ENCODE measurements at regions of chr1 and their contacts with region 1.

Region 1: DNA sequence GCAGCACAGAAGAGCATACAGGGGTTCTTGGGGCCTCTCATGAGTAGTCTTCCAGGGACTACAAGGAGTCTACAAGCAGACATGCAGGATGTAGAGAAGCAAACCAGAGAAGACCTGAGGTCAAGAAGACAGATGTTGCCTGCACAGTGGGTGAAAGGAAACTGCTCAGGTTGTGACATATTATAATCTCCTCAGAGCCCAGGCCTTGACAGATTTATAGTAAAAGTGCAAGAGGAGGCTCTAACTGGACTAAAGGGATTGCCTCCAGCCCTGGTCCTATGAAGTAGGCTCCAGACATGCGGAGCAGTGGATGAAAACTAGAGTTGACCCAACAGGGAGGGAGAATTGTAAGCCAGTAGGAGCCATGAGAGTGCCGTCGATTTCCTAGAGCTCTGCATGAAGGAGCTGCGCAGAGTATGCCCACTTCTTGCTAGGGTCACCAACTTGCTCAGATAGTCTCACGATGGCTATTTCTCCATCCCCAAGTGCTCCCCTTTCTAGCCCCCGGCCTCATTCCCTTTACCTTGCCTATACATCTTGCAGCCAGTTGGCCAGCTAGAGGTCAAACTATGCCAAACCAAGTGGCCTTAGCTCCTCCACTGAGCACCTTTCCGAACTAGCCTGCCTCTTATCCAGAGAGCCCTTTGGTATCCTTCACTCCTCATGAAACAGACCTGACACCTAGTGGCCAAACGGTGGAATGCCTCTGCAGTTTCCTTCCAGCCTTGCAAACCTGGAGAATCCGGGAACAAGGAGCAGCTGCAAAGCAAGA is 36.2 kb upstream of the IPO9 start:
- DNase-seq: peak; percentile 96
- H3K4me3 Mint-ChIP-seq: no peak overlapping the region
- H3K27ac Mint-ChIP-seq: no peak overlapping the region
- H3K4me1 Mint-ChIP-seq: peaks cover 32% of the 10 kb centered on the region
- H3K27me3 Mint-ChIP-seq: no peaks in the 10 kb centered on the region
- CTCF ChIP-seq: peak; percentile 100

Region 2: GRCh38 chr1:201495471-201496295 is 297.0 kb before region 1 on chr1:
- CTCF ChIA-PET with region 1: no interaction called
- POLR2A ChIA-PET with region 1: no interaction called
- intact Hi-C with region 1: no loop called
- DNase-seq: no peak
- H3K4me3 Mint-ChIP-seq: no peak overlapping the region
- H3K27ac Mint-ChIP-seq: no peak overlapping the region
- H3K4me1 Mint-ChIP-seq: peaks cover 50% of the 10 kb centered on the region
- H3K27me3 Mint-ChIP-seq: no peaks in the 10 kb centered on the region
- CTCF ChIP-seq: no peak

Region 3: DNA sequence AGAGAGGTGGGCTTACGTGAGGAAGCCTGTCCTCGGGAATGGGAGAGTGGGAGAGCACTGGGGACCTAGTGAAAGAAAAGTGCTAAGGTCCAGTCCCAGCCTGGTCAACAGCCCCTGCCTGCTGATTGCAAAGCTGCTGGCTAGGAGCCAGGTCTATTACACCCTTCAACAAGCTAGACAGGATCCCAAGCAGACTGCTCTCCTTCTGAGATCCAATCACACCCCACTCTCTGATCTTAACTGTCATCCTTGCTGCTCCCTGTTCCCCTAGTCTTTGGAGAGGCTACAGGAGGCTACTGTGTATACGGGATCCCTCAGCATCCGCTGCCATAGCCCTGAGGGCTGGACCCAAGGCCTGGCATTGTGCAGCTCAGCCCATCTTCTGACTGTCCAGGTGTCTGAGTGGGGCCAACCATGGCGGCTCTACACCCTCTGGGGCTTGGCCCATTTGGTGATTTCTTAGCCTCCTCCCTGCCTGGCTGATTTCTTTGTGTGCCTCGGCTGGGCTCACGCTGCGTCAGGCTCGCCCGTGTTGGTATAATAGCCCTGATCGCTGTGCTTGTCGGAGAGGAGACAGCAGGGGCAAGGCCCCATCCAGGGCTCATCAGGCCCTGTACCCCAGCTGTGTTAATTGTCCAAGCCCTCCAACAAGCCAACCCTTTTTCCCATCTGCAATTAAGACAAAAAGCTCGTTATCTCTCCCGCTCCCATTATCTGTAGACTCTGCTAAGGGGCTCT is 209.8 kb before region 1 on chr1:
- CTCF ChIA-PET with region 1: interaction called, 10 read pairs
- POLR2A ChIA-PET with region 1: interaction called, 4 read pairs
- intact Hi-C with region 1: no loop called
- DNase-seq: peak; percentile 60
- H3K4me3 Mint-ChIP-seq: no peak overlapping the region
- H3K27ac Mint-ChIP-seq: no peak overlapping the region
- H3K4me1 Mint-ChIP-seq: peaks cover 28% of the 10 kb centered on the region
- H3K27me3 Mint-ChIP-seq: peaks cover 12% of the 10 kb centered on the region
- CTCF ChIP-seq: no peak

Region 4: GRCh38 chr1:201728731-201729130 is 64.0 kb before region 1 on chr1:
- CTCF ChIA-PET with region 1: interaction called, 1,744 read pairs
- POLR2A ChIA-PET with region 1: interaction called, 3 read pairs
- intact Hi-C with region 1: no loop called
- DNase-seq: no peak
- H3K4me3 Mint-ChIP-seq: no peak overlapping the region
- H3K27ac Mint-ChIP-seq: no peak overlapping the region
- H3K4me1 Mint-ChIP-seq: peaks cover 6% of the 10 kb centered on the region
- H3K27me3 Mint-ChIP-seq: no peaks in the 10 kb centered on the region
- CTCF ChIP-seq: no peak

Region 5: DNA sequence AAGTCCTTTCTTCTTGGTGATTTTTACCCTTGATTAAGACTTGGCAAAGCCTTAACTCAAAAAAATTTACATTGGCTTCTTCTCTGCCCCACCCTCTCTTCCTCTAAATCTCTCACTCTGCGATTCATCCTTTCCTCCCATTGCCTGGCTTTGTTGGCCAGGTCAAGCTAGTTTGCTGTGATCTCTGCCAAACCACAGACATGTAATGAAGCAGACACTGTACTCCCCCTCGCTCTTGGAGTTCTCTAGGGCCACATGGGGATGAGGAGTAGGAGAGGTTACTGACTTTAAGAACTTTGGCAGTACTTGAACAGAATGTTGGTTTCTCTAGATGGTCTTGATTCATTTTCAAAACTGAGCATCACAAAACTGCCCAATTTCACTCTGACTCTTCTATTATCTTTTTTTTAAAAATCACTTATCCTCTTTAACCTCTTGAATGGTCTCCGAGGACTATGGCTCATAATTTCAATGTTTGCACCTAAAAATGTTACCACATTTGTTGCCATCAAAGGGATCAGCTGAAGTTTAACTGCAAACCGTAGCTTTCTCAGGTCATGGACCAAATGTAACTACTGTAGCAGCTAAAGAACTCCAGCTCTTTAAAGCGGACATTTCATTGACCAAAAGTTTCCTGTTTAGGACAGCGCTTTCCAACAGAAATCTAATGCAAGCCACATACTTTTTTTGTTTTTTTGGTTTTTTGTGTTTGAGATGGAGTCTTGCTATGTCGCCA is 26.4 kb before region 1 on chr1:
- CTCF ChIA-PET with region 1: interaction called, 61 read pairs
- POLR2A ChIA-PET with region 1: interaction called, 3 read pairs
- intact Hi-C with region 1: no loop called
- DNase-seq: peak; percentile 97
- H3K4me3 Mint-ChIP-seq: peak overlapping the region; percentile 1
- H3K27ac Mint-ChIP-seq: peak overlapping the region; percentile 5
- H3K4me1 Mint-ChIP-seq: peaks cover 49% of the 10 kb centered on the region
- H3K27me3 Mint-ChIP-seq: no peaks in the 10 kb centered on the region
- CTCF ChIP-seq: no peak

Region 6: DNA sequence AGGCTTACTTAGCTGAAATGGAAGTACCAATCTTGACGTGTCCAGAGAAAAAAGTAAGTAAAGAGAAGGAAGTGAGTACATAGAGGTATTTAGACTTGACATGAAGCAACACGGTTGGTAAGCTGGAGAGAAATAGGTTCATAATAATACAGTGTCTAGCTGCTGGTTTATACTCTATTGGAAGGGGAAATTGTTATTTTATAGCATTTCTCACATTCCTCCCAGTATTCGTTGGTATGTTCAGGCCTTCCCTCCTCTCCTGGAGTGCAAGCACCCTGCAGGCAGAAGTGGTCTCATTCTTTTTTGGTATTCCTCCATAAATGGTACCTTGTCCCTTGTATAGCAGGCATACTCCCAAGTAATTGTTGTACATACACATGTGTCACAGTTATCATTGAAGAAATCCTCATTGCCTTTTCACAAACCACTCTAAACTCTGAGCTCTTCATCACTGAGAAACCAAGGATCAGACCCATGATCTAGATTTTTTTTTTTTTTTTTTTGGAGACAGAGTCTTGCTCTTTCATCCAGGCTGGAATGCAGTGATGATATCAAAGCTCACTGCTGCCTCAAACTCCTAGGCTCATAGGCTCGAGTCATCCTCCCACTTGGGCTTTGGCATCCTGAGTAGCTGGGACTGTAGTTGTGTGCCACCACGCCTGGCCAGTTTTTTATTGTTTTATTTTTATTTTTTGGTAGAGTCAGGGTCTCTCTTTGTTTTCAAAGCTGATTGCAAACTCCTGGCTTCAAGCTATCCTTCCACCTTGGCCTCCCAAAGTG is 26.4 kb after region 1 on chr1:
- CTCF ChIA-PET with region 1: interaction called, 23 read pairs
- POLR2A ChIA-PET with region 1: no interaction called
- intact Hi-C with region 1: no loop called
- DNase-seq: no peak
- H3K4me3 Mint-ChIP-seq: no peak overlapping the region
- H3K27ac Mint-ChIP-seq: no peak overlapping the region
- H3K4me1 Mint-ChIP-seq: no peaks in the 10 kb centered on the region
- H3K27me3 Mint-ChIP-seq: no peaks in the 10 kb centered on the region
- CTCF ChIP-seq: no peak

Region 7: DNA sequence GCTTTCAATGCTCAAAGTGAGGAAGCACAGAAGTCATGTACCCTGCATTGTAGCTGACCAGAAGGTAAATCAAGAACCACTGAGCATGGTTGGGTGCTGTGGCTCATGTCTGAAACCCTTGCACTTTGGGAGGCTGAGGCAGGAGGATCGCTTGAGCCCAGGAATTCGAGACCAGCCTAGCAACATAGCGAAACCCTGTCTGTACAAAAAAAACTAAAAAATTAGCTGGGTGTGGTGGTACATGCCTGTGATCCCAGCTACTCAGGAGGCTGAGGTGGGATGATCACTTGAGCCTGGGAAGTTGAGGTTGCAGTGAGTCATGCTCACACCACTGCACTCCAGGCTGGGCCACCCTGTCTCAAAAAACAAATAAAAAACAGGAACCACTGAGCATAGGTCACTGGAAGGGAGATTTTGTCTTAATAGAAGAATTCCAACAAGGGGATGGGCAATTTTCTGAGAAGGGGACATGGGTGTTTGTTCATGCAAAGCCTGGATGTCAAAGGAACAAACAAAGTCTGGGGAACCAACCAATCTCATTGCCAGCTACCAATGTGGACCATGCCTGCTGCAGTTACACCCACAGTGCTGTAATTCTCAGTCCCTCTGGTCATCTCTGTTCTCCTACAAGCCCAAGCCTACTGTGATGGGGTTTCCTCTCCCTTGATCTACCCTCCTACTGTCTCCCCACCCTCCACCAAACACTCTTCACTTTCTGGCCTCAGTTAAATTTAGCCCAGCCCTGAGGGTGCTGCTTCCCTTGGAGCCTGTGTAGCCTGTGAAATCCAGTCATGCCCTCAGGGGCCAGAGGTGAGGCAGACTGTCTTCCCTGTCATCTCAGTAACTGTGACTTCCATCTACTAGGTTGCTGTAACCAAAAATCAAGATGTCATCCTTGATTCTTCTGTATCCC is 265.5 kb after region 1 on chr1:
- CTCF ChIA-PET with region 1: no interaction called
- POLR2A ChIA-PET with region 1: no interaction called
- intact Hi-C with region 1: no loop called
- DNase-seq: peak; percentile 82
- H3K4me3 Mint-ChIP-seq: no peak overlapping the region
- H3K27ac Mint-ChIP-seq: peak overlapping the region; percentile 97
- H3K4me1 Mint-ChIP-seq: peaks cover 33% of the 10 kb centered on the region
- H3K27me3 Mint-ChIP-seq: no peaks in the 10 kb centered on the region
- CTCF ChIP-seq: no peak

Region 8: GRCh38 chr1:202112839-202113672 is 320.3 kb after region 1 on chr1:
- CTCF ChIA-PET with region 1: no interaction called
- POLR2A ChIA-PET with region 1: no interaction called
- intact Hi-C with region 1: no loop called
- DNase-seq: peak; percentile 27
- H3K4me3 Mint-ChIP-seq: no peak overlapping the region
- H3K27ac Mint-ChIP-seq: no peak overlapping the region
- H3K4me1 Mint-ChIP-seq: peaks cover 31% of the 10 kb centered on the region
- H3K27me3 Mint-ChIP-seq: no peaks in the 10 kb centered on the region
- CTCF ChIP-seq: no peak

Region 9: DNA sequence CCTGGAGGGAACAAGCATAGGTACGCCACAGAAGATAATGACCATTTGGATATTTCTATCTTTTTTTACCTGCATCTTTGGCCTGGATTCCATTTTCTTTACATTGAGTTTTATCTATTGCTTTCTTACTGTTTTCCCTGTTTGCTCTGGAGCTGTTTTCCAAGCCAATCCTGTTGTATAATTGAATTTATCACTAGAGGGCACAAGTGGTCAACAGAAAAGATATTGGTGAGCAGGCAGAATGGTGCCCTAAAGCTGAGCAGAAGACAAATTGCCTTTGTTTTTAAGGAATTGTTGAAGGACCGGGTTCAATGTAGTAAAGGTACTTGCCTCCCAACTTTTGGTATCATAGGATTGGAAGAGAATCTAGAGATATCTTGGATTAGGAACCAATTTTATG is 708.6 kb after region 1 on chr1:
- CTCF ChIA-PET with region 1: no interaction called
- POLR2A ChIA-PET with region 1: no interaction called
- intact Hi-C with region 1: no loop called
- DNase-seq: peak; percentile 64
- H3K4me3 Mint-ChIP-seq: no peak overlapping the region
- H3K27ac Mint-ChIP-seq: no peak overlapping the region
- H3K4me1 Mint-ChIP-seq: peaks cover 10% of the 10 kb centered on the region
- H3K27me3 Mint-ChIP-seq: no peaks in the 10 kb centered on the region
- CTCF ChIP-seq: peak; percentile 89

Measured in MCF 10A (cell line).